ENCODE measurements at regions of chr17 and their contacts with region 1.

Region 1: GRCh38 chr17:50380369-50381259 is 7.6 kb downstream of the EME1 start:
- DNase-seq: no peak
- ATAC-seq: no peak
- H3K4me3 ChIP-seq: no peak overlapping the region
- H3K4me3 Mint-ChIP-seq: no peak overlapping the region
- H3K27ac ChIP-seq: no peak overlapping the region
- H3K27ac Mint-ChIP-seq: peak overlapping the region; percentile 17
- H3K4me1 ChIP-seq: no peaks in the 10 kb centered on the region
- H3K4me1 Mint-ChIP-seq: no peaks in the 10 kb centered on the region
- H3K27me3 ChIP-seq: no peaks in the 10 kb centered on the region
- H3K27me3 Mint-ChIP-seq: no peaks in the 10 kb centered on the region
- CTCF ChIP-seq: no peak

Region 2: DNA sequence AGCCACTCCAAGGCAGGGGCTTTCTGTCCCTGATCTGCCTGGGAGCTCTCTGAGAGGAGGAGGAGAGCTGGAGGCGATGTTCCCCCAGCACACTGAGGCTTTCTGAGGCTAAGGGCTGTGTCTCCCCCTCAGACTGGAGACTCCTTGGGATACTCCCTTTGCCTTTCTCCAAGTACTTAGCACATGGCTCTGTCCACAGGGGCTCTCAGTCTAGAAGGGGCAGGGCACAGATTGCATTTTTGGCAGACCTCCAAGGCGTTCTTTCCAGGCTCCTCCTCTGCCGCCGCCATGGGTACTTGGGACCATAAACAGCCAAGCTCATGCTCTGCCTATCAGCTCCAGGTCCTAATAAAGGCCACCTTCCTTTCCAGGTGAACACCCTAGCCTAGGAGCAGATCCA is 1410.4 kb before region 1 on chr17:
- CTCF ChIA-PET with region 1: no interaction called
- POLR2A ChIA-PET with region 1: no interaction called
- intact Hi-C with region 1: loop called in 1 of 2 experiments (anchors 10 kb)
- DNase-seq: no peak
- ATAC-seq: no peak
- H3K4me3 ChIP-seq: no peak overlapping the region
- H3K4me3 Mint-ChIP-seq: no peak overlapping the region
- H3K27ac ChIP-seq: no peak overlapping the region
- H3K27ac Mint-ChIP-seq: no peak overlapping the region
- H3K4me1 ChIP-seq: no peaks in the 10 kb centered on the region
- H3K4me1 Mint-ChIP-seq: no peaks in the 10 kb centered on the region
- H3K27me3 ChIP-seq: peaks cover 10 to 27% of the 10 kb centered on the region in 2 experiments
- H3K27me3 Mint-ChIP-seq: peaks cover 68% of the 10 kb centered on the region
- CTCF ChIP-seq: no peak

Region 3: DNA sequence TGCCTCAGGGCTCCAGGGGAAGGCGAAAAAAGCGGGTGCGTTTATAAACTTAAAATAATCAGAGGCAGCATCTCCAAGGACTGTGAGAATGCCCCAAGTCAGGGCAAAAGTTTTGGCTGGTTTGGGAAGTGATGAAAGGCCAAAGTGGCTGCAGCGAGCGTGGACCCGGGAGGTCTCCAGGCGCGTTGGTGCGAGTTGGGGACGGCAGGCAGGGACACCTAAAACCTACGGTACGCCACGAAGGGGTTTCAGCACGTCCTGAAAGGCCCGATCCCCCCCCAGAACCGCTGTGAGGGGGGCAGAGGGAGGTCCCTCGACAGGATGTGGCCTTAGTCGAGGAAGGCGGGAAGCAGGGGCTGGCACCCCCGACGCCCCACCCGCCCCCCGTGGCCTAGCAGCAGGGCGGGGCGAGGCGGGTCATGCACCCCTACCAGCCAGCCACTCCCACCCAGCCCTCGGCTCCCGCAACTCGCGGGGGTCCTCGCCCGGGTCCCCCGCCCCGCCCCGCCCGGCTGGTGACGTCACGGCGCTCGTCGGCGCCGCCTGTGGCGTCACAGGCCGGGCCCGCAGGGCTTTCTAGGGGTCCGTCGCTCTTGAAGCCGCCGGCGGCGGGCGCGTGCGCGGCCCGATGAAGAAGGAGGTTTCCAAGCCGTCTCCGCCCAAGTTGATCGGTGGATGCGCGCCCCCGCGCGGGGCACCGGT is 127.4 kb after region 1 on chr17 and contains the start of gene MYCBPAP:
- CTCF ChIA-PET with region 1: no interaction called
- POLR2A ChIA-PET with region 1: no interaction called
- intact Hi-C with region 1: no loop called
- DNase-seq: peak; percentile 26 to 90 (median 72)
- ATAC-seq: peak; percentile 69
- H3K4me3 ChIP-seq: peak within 1 kb of the TSS; percentile 68
- H3K4me3 Mint-ChIP-seq: peak within 1 kb of the TSS; percentile 88
- H3K27ac ChIP-seq: peak within 1 kb of the TSS in 1 of 2 donors; percentile 36
- H3K27ac Mint-ChIP-seq: peak within 1 kb of the TSS; percentile 66
- H3K4me1 ChIP-seq: peaks cover 38% of the 10 kb centered on the region
- H3K4me1 Mint-ChIP-seq: peaks cover 30% of the 10 kb centered on the region
- H3K27me3 ChIP-seq: no peaks in the 10 kb centered on the region
- H3K27me3 Mint-ChIP-seq: peaks cover 5% of the 10 kb centered on the region
- CTCF ChIP-seq: no peak
- total RNA-seq, gene MYCBPAP: 0.78 to 1.5 TPM

Measured in CD4-positive, alpha-beta T cell (primary cell).